ENCODE measurements at regions of chr7 and their contacts with region 1.

Region 1: DNA sequence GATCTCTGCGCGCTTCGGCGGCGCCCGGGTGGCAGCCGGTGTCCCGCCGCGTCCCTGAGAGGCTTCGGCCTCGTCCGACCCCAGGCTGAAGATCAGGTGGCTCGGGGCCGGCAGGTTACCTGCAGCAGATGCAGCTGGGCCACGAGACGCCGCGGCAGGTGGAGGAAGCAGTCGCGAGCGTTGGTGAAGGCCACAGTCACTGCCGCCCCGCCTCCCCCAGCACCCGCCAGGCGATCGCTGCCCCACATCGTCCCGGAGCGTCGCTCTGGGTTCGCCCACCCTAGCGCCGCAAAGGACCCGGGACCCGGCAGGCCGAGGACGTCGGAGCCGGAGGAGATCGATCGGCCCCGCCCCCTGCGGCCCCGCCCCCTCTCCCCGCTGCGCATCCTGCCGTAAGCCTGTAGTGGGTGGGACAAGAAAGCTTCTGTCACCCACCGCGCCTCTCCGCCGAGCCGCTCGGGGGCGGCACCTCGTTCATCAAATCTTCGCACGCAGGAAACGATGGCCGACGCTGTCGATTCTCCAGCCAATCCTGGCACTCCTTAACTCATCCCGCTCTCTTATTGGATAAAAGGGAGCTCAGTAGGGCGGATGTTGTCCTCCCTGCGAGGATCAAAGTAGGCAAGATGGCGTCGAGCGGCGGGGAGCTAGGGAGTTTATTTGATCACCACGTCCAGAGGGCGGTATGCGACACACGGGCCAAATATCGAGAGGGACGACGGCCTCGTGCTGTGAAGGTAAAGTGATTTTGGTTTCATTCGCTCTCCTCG is at the starts of genes PEX1 and RBM48:
- DNase-seq: peak; percentile 90 to 99 (median 94)
- ATAC-seq: peak; percentile 89
- H3K4me3 ChIP-seq: peak within 1 kb of the TSS; percentile 94 to 95
- H3K4me3 Mint-ChIP-seq: peak within 1 kb of the TSS; percentile 91
- H3K27ac ChIP-seq: peak within 1 kb of the TSS; percentile 91 to 98
- H3K27ac Mint-ChIP-seq: peak within 1 kb of the TSS; percentile 98
- H3K4me1 ChIP-seq: peaks cover 22% of the 10 kb centered on the region
- H3K4me1 Mint-ChIP-seq: peaks cover 51% of the 10 kb centered on the region
- H3K27me3 ChIP-seq: no peaks in the 10 kb centered on the region
- H3K27me3 Mint-ChIP-seq: no peaks in the 10 kb centered on the region
- CTCF ChIP-seq: no peak
- total RNA-seq, gene PEX1: 17.8 to 18.1 TPM
- total RNA-seq, gene RBM48: 52.7 to 54.6 TPM

Region 2: GRCh38 chr7:91843831-91844230 is 684.5 kb before region 1 on chr7:
- CTCF ChIA-PET with region 1: no interaction called
- POLR2A ChIA-PET with region 1: no interaction called
- intact Hi-C with region 1: no loop called
- DNase-seq: no peak
- ATAC-seq: no peak
- H3K4me3 ChIP-seq: no peak overlapping the region
- H3K4me3 Mint-ChIP-seq: no peak overlapping the region
- H3K27ac ChIP-seq: no peak overlapping the region
- H3K27ac Mint-ChIP-seq: no peak overlapping the region
- H3K4me1 ChIP-seq: no peaks in the 10 kb centered on the region
- H3K4me1 Mint-ChIP-seq: no peaks in the 10 kb centered on the region
- H3K27me3 ChIP-seq: no peaks in the 10 kb centered on the region
- H3K27me3 Mint-ChIP-seq: no peaks in the 10 kb centered on the region
- CTCF ChIP-seq: no peak

Region 3: GRCh38 chr7:92178927-92179924 is 349.1 kb before region 1 on chr7 and contains the start of gene LRRD1:
- CTCF ChIA-PET with region 1: no interaction called
- POLR2A ChIA-PET with region 1: no interaction called
- intact Hi-C with region 1: loop called in 1 of 2 experiments (anchors 1 kb)
- DNase-seq: peak; percentile 81 to 95 (median 87)
- ATAC-seq: peak; percentile 100
- H3K4me3 ChIP-seq: peak within 1 kb of the TSS; percentile 58 to 64
- H3K4me3 Mint-ChIP-seq: peak within 1 kb of the TSS; percentile 82
- H3K27ac ChIP-seq: peak within 1 kb of the TSS in 1 of 2 experiments; percentile 24
- H3K27ac Mint-ChIP-seq: no peak within 1 kb of the TSS
- H3K4me1 ChIP-seq: peaks cover 3% of the 10 kb centered on the region
- H3K4me1 Mint-ChIP-seq: peaks cover 5% of the 10 kb centered on the region
- H3K27me3 ChIP-seq: no peaks in the 10 kb centered on the region
- H3K27me3 Mint-ChIP-seq: peaks cover 5% of the 10 kb centered on the region
- CTCF ChIP-seq: peak; percentile 97
- total RNA-seq, gene LRRD1: not detected

Region 4: GRCh38 chr7:92421676-92422435 is 106.5 kb before region 1 on chr7:
- CTCF ChIA-PET with region 1: no interaction called
- POLR2A ChIA-PET with region 1: no interaction called
- intact Hi-C with region 1: loop called in 1 of 2 experiments (anchors 1 kb)
- DNase-seq: no peak
- ATAC-seq: no peak
- H3K4me3 ChIP-seq: no peak overlapping the region
- H3K4me3 Mint-ChIP-seq: no peak overlapping the region
- H3K27ac ChIP-seq: no peak overlapping the region
- H3K27ac Mint-ChIP-seq: no peak overlapping the region
- H3K4me1 ChIP-seq: no peaks in the 10 kb centered on the region
- H3K4me1 Mint-ChIP-seq: peaks cover 9% of the 10 kb centered on the region
- H3K27me3 ChIP-seq: peaks cover 0 to 10% of the 10 kb centered on the region in 2 experiments
- H3K27me3 Mint-ChIP-seq: peaks cover 19% of the 10 kb centered on the region
- CTCF ChIP-seq: no peak

Region 5: GRCh38 chr7:92641921-92642511 is 113.6 kb after region 1 on chr7:
- CTCF ChIA-PET with region 1: no interaction called
- POLR2A ChIA-PET with region 1: no interaction called
- intact Hi-C with region 1: no loop called
- DNase-seq: peak in 7 of 9 experiments; percentile 10 to 70 (median 36)
- ATAC-seq: peak; percentile 67
- H3K4me3 ChIP-seq: no peak overlapping the region
- H3K4me3 Mint-ChIP-seq: no peak overlapping the region
- H3K27ac ChIP-seq: peak overlapping the region in 1 of 2 experiments; percentile 34
- H3K27ac Mint-ChIP-seq: peak overlapping the region; percentile 71
- H3K4me1 ChIP-seq: peaks cover 27% of the 10 kb centered on the region
- H3K4me1 Mint-ChIP-seq: peaks cover 39% of the 10 kb centered on the region
- H3K27me3 ChIP-seq: no peaks in the 10 kb centered on the region
- H3K27me3 Mint-ChIP-seq: no peaks in the 10 kb centered on the region
- CTCF ChIP-seq: no peak

Region 6: GRCh38 chr7:92691578-92691977 is 163.2 kb after region 1 on chr7:
- CTCF ChIA-PET with region 1: no interaction called
- POLR2A ChIA-PET with region 1: no interaction called
- intact Hi-C with region 1: no loop called
- DNase-seq: peak in 3 of 9 experiments; percentile 17 to 68 (median 49)
- ATAC-seq: peak; percentile 86
- H3K4me3 ChIP-seq: no peak overlapping the region
- H3K4me3 Mint-ChIP-seq: no peak overlapping the region
- H3K27ac ChIP-seq: no peak overlapping the region
- H3K27ac Mint-ChIP-seq: no peak overlapping the region
- H3K4me1 ChIP-seq: peaks cover 11% of the 10 kb centered on the region
- H3K4me1 Mint-ChIP-seq: peaks cover 30% of the 10 kb centered on the region
- H3K27me3 ChIP-seq: no peaks in the 10 kb centered on the region
- H3K27me3 Mint-ChIP-seq: no peaks in the 10 kb centered on the region
- CTCF ChIP-seq: peak; percentile 73

Region 7: GRCh38 chr7:92717993-92718716 is 189.8 kb after region 1 on chr7:
- CTCF ChIA-PET with region 1: no interaction called
- POLR2A ChIA-PET with region 1: no interaction called
- intact Hi-C with region 1: loop called in 1 of 2 experiments (anchors 5 kb)
- DNase-seq: peak in 8 of 9 experiments; percentile 17 to 76 (median 44)
- ATAC-seq: peak; percentile 94
- H3K4me3 ChIP-seq: peak overlapping the region; percentile 41 to 56
- H3K4me3 Mint-ChIP-seq: peak overlapping the region; percentile 92
- H3K27ac ChIP-seq: peak overlapping the region; percentile 42 to 64
- H3K27ac Mint-ChIP-seq: peak overlapping the region; percentile 95
- H3K4me1 ChIP-seq: peaks cover 20% of the 10 kb centered on the region
- H3K4me1 Mint-ChIP-seq: peaks cover 29% of the 10 kb centered on the region
- H3K27me3 ChIP-seq: no peaks in the 10 kb centered on the region
- H3K27me3 Mint-ChIP-seq: no peaks in the 10 kb centered on the region
- CTCF ChIP-seq: no peak

Measured in CD8-positive, alpha-beta T cell (primary cell).